Natural killer cell (primary cell): ENCODE measurements at regions of chr3 and their contacts with region 1.

Region 1: GRCh38 chr3:188954590-188955208 is 217.1 kb upstream of the TPRG1 start:
- DNase-seq: peak; percentile 59 to 87
- ATAC-seq: peak; percentile 73 to 85 (median 83)
- H3K4me3 ChIP-seq: no peak overlapping the region
- H3K4me3 Mint-ChIP-seq: no peak overlapping the region
- H3K27ac ChIP-seq: no peak overlapping the region
- H3K27ac Mint-ChIP-seq: no peak overlapping the region
- H3K4me1 ChIP-seq: peaks cover 3% of the 10 kb centered on the region
- H3K4me1 Mint-ChIP-seq: no peaks in the 10 kb centered on the region
- H3K27me3 ChIP-seq: no peaks in the 10 kb centered on the region
- H3K27me3 Mint-ChIP-seq: peaks cover 0 to 2% of the 10 kb centered on the region in 2 donors
- CTCF ChIP-seq: peak; percentile 87

Region 2: GRCh38 chr3:188749010-188749617 is 205.6 kb before region 1 on chr3:
- intact Hi-C with region 1: loop called (anchors 10 kb)
- DNase-seq: peak; percentile 25 to 82
- ATAC-seq: peak; percentile 76 to 83 (median 82)
- H3K4me3 ChIP-seq: no peak overlapping the region
- H3K4me3 Mint-ChIP-seq: no peak overlapping the region
- H3K27ac ChIP-seq: no peak overlapping the region
- H3K27ac Mint-ChIP-seq: no peak overlapping the region
- H3K4me1 ChIP-seq: no peaks in the 10 kb centered on the region
- H3K4me1 Mint-ChIP-seq: peaks cover 13 to 16% of the 10 kb centered on the region in 2 donors
- H3K27me3 ChIP-seq: no peaks in the 10 kb centered on the region
- H3K27me3 Mint-ChIP-seq: no peaks in the 10 kb centered on the region
- CTCF ChIP-seq: peak; percentile 89

Region 3: GRCh38 chr3:189160536-189161269 is 206.0 kb after region 1 on chr3:
- intact Hi-C with region 1: no loop called
- DNase-seq: no peak
- ATAC-seq: no peak
- H3K4me3 ChIP-seq: no peak overlapping the region
- H3K4me3 Mint-ChIP-seq: no peak overlapping the region
- H3K27ac ChIP-seq: no peak overlapping the region
- H3K27ac Mint-ChIP-seq: no peak overlapping the region
- H3K4me1 ChIP-seq: no peaks in the 10 kb centered on the region
- H3K4me1 Mint-ChIP-seq: no peaks in the 10 kb centered on the region
- H3K27me3 ChIP-seq: no peaks in the 10 kb centered on the region
- H3K27me3 Mint-ChIP-seq: peaks cover 20 to 24% of the 10 kb centered on the region in 2 donors
- CTCF ChIP-seq: no peak